WTC11 (cell line): ENCODE measurements at regions of chr11 and their contacts with region 1.

Region 1: GRCh38 chr11:62508268-62509058 is 38.1 kb downstream of the AHNAK start:
- DNase-seq: peak; percentile 75
- ATAC-seq: peak; percentile 75
- H3K4me3 Mint-ChIP-seq: peak overlapping the region; percentile 32
- H3K27ac Mint-ChIP-seq: peak overlapping the region; percentile 71
- H3K4me1 Mint-ChIP-seq: peaks cover 37% of the 10 kb centered on the region
- H3K27me3 Mint-ChIP-seq: peaks cover 42% of the 10 kb centered on the region
- CTCF ChIP-seq: no peak

Region 2: DNA sequence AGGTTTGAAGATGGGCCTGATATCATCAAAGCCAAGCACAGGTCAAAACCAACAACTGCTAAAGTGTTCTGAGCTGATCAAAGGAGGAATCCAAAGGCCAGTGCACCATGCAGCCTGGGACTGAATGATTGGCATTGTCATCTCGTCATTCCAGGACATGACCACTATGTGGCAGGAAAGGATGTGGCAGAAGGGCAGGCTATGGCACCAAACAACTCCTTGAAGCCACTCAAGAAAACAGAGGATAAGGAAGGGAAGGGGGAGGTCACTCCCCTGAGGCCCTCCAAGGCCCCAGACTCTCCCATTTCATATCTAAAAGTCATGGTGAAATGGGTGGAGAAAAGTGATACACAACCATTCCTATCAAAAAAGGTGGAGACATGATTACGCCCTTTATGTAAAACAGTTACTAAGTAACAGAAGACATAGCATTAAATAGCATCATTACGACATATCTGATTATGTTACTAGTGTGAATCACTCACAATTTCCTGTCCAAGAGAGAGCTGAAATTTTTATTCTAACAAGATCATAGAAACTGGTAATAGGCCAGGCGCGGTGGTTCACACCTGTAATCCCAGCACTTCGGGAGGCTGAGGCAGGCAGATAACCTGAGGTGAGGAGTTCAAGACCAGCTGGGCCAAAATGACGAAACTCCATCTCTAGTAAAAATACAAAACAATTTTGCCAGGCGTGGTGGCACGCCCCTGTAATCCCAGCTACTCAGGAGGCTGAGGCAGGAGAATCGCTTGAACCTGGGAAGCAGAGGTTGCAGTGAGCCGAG is 11.1 kb before region 1 on chr11:
- CTCF ChIA-PET with region 1: interaction called, 12 read pairs
- POLR2A ChIA-PET with region 1: interaction called, 5 read pairs
- DNase-seq: peak; percentile 43
- ATAC-seq: peak; percentile 75
- H3K4me3 Mint-ChIP-seq: no peak overlapping the region
- H3K27ac Mint-ChIP-seq: peak overlapping the region; percentile 19; the same call in 1 of the 2 replicates
- H3K4me1 Mint-ChIP-seq: peaks cover 26% of the 10 kb centered on the region
- H3K27me3 Mint-ChIP-seq: peaks cover 11% of the 10 kb centered on the region
- CTCF ChIP-seq: no peak

Region 3: DNA sequence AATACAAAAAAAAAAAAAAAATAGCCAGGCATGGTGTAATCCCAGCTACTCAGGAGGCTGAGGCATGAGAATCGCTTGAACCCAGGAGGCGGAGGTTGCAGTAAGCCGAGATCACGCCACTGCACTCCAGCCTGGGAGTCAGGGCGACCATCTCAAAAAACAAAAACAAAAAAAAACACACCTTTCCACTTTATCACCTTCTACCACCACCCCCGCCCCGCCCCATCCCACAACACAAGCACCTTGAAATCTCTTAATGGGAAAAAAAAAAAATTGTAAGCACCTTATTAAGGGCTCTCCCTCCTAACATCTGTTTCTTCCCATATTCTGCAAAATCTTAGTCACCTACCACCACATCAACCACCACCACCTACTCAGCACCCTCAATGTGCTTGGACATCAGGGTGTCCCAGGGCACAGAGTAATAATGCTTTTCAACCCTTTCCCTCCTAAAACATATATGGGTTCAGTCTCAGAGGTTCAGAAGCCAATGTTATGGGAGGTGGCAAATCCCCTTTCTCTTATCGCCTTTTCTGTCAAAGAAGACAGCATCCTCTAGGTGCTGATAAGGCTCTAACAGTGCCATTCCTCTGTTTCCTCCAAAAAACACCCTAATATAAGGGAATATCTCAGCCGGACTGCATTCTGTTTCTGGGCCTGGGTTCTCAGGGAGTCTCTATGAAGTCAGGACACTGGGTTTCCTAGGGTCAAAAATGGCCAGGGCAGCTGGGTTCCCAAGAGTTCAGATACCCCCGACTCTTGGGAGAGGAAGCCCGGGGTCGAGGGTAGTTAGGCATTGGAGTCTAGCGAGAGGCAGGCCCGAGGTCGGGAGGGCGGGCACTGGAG is 143.9 kb after region 1 on chr11:
- CTCF ChIA-PET with region 1: no interaction called
- POLR2A ChIA-PET with region 1: no interaction called
- DNase-seq: no peak
- ATAC-seq: no peak
- H3K4me3 Mint-ChIP-seq: peak overlapping the region; percentile 90
- H3K27ac Mint-ChIP-seq: peak overlapping the region; percentile 69
- H3K4me1 Mint-ChIP-seq: peaks cover 8% of the 10 kb centered on the region
- H3K27me3 Mint-ChIP-seq: no peaks in the 10 kb centered on the region
- CTCF ChIP-seq: no peak